Heart left ventricle (tissue), 16 donors: ENCODE measurements at regions of chr3 and their contacts with region 1.

Region 1: GRCh38 chr3:129947538-129948240 is 26.8 kb upstream of the TRH start:
- DNase-seq: no peak
- ATAC-seq: no peak
- H3K4me3 ChIP-seq: no peak overlapping the region
- H3K27ac ChIP-seq: no peak overlapping the region
- H3K4me1 ChIP-seq: peaks cover 0 to 6% (median 0%) of the 10 kb centered on the region in 12 donors
- H3K27me3 ChIP-seq: peaks cover 0 to 7% (median 0%) of the 10 kb centered on the region in 9 donors
- CTCF ChIP-seq: no peak
- POLR2A ChIP-seq: no peak

Region 2: DNA sequence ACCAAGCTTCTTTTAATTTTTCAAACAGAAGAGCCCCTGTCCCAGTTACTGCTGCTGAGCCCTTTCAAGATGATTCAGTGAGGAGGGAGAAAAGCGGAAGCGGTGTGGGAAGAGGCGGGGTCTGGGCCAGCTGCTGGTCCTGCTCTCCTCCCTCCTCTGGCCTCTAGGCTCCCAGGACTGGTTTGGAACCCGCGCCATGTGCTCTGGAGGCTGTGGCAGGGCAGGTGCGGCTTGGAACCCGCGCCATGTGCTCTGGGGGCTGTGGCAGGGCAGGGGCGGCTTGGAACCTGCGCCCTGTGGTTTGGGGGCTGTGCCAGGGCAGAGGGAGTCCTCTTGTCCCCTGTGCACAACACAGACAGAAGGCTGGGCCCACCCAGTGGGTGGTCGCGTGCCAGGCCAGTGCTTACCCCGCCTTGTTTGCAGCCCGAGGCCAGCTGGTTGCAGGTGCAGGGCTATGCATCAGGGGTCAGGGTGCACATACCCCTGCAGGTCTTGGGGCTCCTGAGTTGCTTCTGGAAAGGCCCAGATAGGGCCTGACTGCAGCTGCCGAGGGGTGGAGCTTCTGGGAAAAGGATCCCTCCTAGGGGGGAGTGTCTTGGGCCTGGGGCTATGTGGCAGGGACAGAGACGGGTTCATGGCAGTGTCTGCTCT is 146.2 kb after region 1 on chr3:
- intact Hi-C with region 1: loop called in 5 of 10 experiments (anchors 2 to 10 kb)
- DNase-seq: no peak
- ATAC-seq: no peak
- H3K4me3 ChIP-seq: peak overlapping the region in 1 of 12 donors; percentile 28
- H3K27ac ChIP-seq: no peak overlapping the region
- H3K4me1 ChIP-seq: peaks cover 0 to 19% (median 0%) of the 10 kb centered on the region in 12 donors
- H3K27me3 ChIP-seq: no peaks in the 10 kb centered on the region
- CTCF ChIP-seq: no peak
- POLR2A ChIP-seq: no peak